ENCODE measurements at regions of chr17 and their contacts with region 1.

Region 1: DNA sequence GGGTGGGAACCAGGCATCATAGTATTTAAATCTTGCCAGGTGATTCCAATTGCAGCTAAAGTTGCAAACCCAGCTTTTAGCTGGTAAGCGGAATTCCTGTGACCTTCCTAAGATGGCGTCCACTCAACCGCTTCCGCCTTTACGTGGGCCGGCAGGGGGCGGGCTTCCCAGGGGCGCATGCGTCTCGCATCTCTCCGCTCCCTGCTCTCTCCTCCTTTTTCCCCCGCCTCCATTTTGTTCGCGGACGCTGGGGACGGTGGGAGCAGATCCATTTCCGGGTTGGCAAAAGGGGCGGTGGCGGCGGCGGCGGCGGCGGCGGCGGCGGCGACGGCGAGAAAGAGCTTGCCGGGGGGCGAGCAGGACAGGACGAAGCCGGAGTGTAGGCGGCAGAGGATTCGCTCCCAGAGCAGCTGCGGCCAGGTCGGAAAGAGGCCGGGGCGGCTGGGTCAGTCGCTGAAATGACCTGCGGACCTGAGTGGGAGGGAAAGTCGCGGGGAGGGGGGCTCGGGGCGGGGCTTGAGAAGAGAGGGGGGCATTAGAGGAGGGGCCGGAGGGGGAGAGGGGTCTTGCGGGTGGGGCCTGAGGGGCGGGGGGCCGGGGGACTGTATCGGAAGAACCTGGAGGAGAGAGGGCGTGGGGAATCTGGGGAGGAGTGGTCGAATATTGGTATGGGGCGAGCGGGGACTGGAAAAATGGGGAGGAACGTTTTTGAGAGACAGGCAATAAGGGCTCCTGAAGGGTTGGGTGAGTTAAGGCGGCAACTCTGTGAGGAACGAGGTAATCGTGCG is at the start of gene WIPF2:
- DNase-seq: peak; percentile 99
- H3K4me3 Mint-ChIP-seq: peak within 1 kb of the TSS; percentile 82
- H3K27ac Mint-ChIP-seq: peak within 1 kb of the TSS; percentile 95
- H3K4me1 Mint-ChIP-seq: peaks cover 24% of the 10 kb centered on the region
- H3K27me3 Mint-ChIP-seq: no peaks in the 10 kb centered on the region
- total RNA-seq, gene WIPF2: 12.3 to 13.0 TPM

Region 2: DNA sequence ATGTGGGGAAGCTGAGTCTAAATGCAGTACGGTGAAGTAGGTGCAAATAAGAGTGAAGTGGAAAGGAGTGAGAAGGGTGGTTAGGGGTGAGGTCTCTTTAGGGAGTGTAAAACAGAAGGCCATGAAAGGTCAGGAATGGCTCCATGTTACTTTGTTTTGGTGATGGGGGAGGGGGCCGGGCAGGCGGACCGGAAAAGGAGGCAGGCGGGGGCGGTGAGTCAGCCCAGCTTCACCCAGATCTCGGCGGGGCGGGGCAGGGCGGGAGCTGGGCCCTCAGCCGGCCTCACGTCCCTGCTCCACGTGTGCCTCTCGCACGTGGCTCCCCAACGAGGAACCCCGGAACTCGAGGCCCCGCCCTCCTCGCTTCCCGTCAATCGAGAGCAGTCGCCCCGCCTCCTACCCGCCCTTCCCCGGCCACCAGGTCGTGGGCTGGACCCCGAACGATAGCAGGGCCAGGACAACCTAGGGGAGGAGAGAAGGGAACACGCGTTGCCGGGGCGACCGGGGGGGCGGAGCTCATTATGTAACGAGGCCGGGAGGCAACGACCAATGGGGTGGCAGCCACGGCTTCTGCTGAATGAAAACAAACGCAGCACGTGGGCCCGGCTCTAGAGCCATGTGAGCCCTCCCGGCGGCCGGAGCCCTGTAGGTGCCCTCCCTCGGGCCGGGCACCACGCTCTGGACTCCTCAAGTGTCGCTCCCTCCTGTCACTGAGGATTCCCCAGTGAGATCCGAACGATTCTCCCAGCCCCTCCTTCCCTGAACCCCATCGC is 120.2 kb before region 1 on chr17:
- CTCF ChIA-PET with region 1: no interaction called
- intact Hi-C with region 1: no loop called
- DNase-seq: peak; percentile 98
- H3K4me3 Mint-ChIP-seq: peak overlapping the region; percentile 89
- H3K27ac Mint-ChIP-seq: peak overlapping the region; percentile 95
- H3K4me1 Mint-ChIP-seq: peaks cover 85% of the 10 kb centered on the region
- H3K27me3 Mint-ChIP-seq: no peaks in the 10 kb centered on the region

Region 3: GRCh38 chr17:40130352-40131042 is 88.8 kb before region 1 on chr17:
- CTCF ChIA-PET with region 1: no interaction called
- intact Hi-C with region 1: no loop called
- DNase-seq: no peak
- H3K4me3 Mint-ChIP-seq: no peak overlapping the region
- H3K27ac Mint-ChIP-seq: no peak overlapping the region
- H3K4me1 Mint-ChIP-seq: peaks cover 15% of the 10 kb centered on the region
- H3K27me3 Mint-ChIP-seq: no peaks in the 10 kb centered on the region

Region 4: GRCh38 chr17:40203131-40203530 is 16.1 kb before region 1 on chr17:
- CTCF ChIA-PET with region 1: interaction called, 11 read pairs
- intact Hi-C with region 1: no loop called
- DNase-seq: no peak
- H3K4me3 Mint-ChIP-seq: no peak overlapping the region
- H3K27ac Mint-ChIP-seq: no peak overlapping the region
- H3K4me1 Mint-ChIP-seq: no peaks in the 10 kb centered on the region
- H3K27me3 Mint-ChIP-seq: no peaks in the 10 kb centered on the region

Region 5: GRCh38 chr17:40287494-40288369 is 68.5 kb after region 1 on chr17 and contains the start of gene CDC6:
- CTCF ChIA-PET with region 1: interaction called, 8 read pairs
- intact Hi-C with region 1: loop called (anchors 1 kb)
- DNase-seq: peak; percentile 100
- H3K4me3 Mint-ChIP-seq: peak within 1 kb of the TSS; percentile 99
- H3K27ac Mint-ChIP-seq: peak within 1 kb of the TSS; percentile 94
- H3K4me1 Mint-ChIP-seq: peaks cover 47% of the 10 kb centered on the region
- H3K27me3 Mint-ChIP-seq: no peaks in the 10 kb centered on the region
- total RNA-seq, gene CDC6: 86.5 to 90.4 TPM

Region 6: DNA sequence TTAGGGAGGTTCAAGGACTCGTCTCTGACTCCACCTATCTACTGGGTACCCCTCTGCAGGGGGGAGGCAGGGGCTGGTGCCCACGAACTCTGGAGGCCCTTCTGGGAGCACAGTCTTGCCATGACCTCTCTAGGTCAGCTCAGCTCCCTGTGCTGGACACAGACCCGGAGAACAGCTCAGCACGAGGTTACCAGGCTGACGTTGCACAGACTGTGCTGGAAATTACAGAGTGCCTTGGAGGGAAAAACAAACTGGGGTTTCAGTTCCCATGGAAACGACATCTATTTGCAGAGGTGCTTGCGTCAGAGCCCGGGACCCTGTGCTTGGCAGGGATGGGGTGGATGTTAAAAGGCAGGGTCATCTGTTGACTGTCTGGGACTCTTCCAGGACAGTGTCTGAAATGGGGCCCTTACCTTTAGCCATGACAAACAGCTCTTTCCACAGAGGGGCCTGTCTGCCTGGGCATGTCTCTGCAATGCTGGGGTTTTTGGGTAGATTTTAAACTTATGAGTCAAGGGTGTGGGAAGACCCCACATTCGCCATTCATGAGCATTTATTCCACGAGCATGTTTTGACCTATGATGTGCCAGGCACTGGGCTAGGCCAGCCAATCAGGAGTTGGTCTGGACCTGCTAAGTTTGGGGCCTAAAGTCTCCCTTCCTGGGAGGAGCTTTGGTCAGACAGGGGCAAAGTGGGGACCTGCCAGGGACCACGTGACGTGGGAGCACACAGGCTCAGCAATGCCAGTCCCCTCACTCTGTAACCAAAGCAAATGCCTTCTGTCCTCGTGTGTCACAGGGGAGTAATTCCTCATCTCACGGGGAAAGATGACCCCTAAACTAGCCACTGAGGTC is 323.5 kb after region 1 on chr17:
- CTCF ChIA-PET with region 1: no interaction called
- intact Hi-C with region 1: loop called (anchors 10 kb)
- DNase-seq: peak; percentile 89
- H3K4me3 Mint-ChIP-seq: peak overlapping the region; percentile 66
- H3K27ac Mint-ChIP-seq: peak overlapping the region; percentile 96
- H3K4me1 Mint-ChIP-seq: peaks cover 83% of the 10 kb centered on the region
- H3K27me3 Mint-ChIP-seq: no peaks in the 10 kb centered on the region